Esophagus muscularis mucosa (tissue), 4 donors: ENCODE measurements at regions of chr1 and their contacts with region 1.

Region 1: GRCh38 chr1:184186167-184186566 is 134.6 kb downstream of the TSEN15 start:
- DNase-seq: no peak
- H3K4me3 ChIP-seq: no peak overlapping the region
- H3K27ac ChIP-seq: no peak overlapping the region
- H3K4me1 ChIP-seq: peaks cover 7 to 11% (median 8%) of the 10 kb centered on the region in 4 donors
- H3K27me3 ChIP-seq: no peaks in the 10 kb centered on the region
- CTCF ChIP-seq: no peak
- EP300 ChIP-seq: no peak
- POLR2A ChIP-seq: no peak

Region 2: DNA sequence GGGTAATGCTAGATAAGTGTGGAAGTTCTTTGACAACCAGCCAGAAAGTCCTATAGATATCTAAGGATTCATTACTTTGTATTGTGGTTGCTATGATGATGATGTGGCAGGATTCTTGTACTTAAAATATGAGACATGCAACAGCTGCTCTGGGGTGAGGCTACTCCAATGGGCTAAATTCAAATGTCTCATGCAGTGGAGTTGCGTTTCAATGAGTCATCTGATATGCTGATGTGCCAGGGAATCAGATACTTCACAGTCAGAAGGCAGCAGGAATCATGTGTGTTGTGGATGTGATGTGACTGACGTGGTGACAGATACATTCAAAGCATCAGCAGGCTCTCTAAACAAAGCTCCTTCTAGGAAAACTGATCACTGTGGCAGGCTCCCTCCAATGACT is 68.1 kb before region 1 on chr1:
- intact Hi-C with region 1: no loop called
- DNase-seq: no peak
- H3K4me3 ChIP-seq: no peak overlapping the region
- H3K27ac ChIP-seq: no peak overlapping the region
- H3K4me1 ChIP-seq: no peaks in the 10 kb centered on the region
- H3K27me3 ChIP-seq: no peaks in the 10 kb centered on the region
- CTCF ChIP-seq: no peak
- EP300 ChIP-seq: no peak
- POLR2A ChIP-seq: no peak

Region 3: DNA sequence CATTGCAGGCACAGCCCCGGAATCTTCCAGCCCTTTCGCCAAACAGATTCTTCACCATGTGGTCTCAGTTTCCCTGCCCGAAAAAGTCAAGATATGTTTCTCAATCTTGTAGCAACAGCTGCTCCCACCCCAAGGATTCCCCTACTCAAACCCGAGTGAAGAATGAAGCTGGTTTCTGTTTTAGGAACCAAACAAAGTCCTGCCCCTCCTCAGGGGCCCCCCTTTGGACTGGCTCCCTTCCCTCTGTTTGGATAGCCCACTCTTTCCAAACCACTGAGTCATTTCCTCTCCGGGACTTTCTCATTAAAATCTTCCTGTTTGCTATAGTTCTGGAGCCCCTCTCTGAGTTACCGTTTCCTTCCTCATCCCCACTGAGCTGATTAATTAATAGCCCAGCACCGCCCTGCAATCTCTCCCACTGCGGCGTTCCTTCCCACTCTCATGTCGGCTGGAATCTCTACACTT is 33.7 kb before region 1 on chr1:
- intact Hi-C with region 1: no loop called
- DNase-seq: peak; percentile 90
- H3K4me3 ChIP-seq: peak overlapping the region; percentile 39 to 52 (median 46)
- H3K27ac ChIP-seq: peak overlapping the region; percentile 61 to 74 (median 66)
- H3K4me1 ChIP-seq: peaks cover 23 to 34% (median 28%) of the 10 kb centered on the region in 4 donors
- H3K27me3 ChIP-seq: no peaks in the 10 kb centered on the region
- CTCF ChIP-seq: no peak
- EP300 ChIP-seq: no peak
- POLR2A ChIP-seq: no peak

Region 4: GRCh38 chr1:184210862-184211261 is 24.7 kb after region 1 on chr1:
- intact Hi-C with region 1: loop called (anchors 1 kb)
- DNase-seq: peak; percentile 34
- H3K4me3 ChIP-seq: no peak overlapping the region
- H3K27ac ChIP-seq: no peak overlapping the region
- H3K4me1 ChIP-seq: peaks cover 0 to 7% (median 2%) of the 10 kb centered on the region in 4 donors
- H3K27me3 ChIP-seq: no peaks in the 10 kb centered on the region
- CTCF ChIP-seq: no peak
- EP300 ChIP-seq: no peak
- POLR2A ChIP-seq: no peak